Esophagus squamous epithelium (tissue), 5 donors: ENCODE measurements at regions of chr10 and their contacts with region 1.

Region 1: GRCh38 chr10:91908337-91909116 is 759 bp downstream of the FGFBP3 start:
- DNase-seq: peak; percentile 8
- H3K4me3 ChIP-seq: peak overlapping the region; percentile 54 to 98 (median 75)
- H3K27ac ChIP-seq: peak overlapping the region; percentile 65 to 85 (median 73)
- H3K4me1 ChIP-seq: peaks cover 6 to 30% (median 10%) of the 10 kb centered on the region in 3 donors
- H3K27me3 ChIP-seq: peaks cover 0 to 1% (median 0%) of the 10 kb centered on the region in 4 donors
- CTCF ChIP-seq: peak in 5 of 6 experiments; percentile 9 to 37 (median 17)
- POLR2A ChIP-seq: no peak

Region 2: GRCh38 chr10:91758303-91759146 is 150.0 kb before region 1 on chr10:
- intact Hi-C with region 1: loop called (anchors 5 kb)
- DNase-seq: no peak
- H3K4me3 ChIP-seq: no peak overlapping the region
- H3K27ac ChIP-seq: no peak overlapping the region
- H3K4me1 ChIP-seq: no peaks in the 10 kb centered on the region
- H3K27me3 ChIP-seq: peaks cover 0 to 7% (median 0%) of the 10 kb centered on the region in 4 donors
- CTCF ChIP-seq: peak in 5 of 6 experiments; percentile 43 to 67 (median 49)
- POLR2A ChIP-seq: no peak

Region 3: DNA sequence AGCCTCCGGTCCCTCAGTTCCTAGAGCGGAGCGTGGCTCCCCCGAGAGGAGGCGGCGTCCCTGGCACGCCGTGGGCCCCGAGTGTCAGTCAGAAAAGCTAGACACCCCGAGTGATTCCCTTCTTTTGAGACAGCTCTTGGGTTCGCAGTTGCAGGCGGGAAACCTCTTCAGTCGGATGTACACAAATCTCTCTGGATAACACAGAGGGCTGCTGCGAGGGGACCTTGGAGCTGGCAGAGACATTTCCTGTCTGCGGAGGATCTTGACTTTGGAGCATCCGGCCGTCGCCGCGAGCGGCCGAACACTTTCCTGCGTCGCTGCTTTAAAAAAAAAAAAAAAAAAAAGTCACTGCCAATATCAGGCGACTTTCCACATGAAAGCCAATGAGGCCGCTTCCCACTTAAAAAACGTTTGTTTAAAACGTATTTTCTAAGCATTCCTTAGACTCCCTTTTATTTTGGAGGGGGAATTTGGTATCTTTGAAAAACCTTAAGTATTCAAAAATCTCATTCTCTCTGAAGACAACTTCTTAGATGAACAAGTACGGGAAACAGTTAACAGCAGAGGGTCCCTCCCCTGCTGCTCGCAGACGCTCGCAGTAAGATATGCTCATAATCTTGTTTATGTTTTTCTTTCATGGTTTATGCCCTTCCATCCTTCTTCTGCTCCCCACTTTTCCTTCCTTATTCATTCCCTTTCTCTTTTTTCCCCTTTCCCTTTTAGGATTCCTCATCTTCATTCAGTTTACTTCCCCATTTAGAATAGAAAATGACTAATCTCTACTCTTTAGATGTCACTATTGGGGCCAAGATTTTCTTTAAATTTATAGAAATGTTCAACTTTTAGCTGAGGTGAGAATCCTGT is 791.2 kb after region 1 on chr10:
- intact Hi-C with region 1: no loop called
- DNase-seq: no peak
- H3K4me3 ChIP-seq: peak overlapping the region; percentile 17 to 60 (median 39)
- H3K27ac ChIP-seq: peak overlapping the region; percentile 48 to 70 (median 58)
- H3K4me1 ChIP-seq: peaks cover 0 to 25% (median 0%) of the 10 kb centered on the region in 3 donors
- H3K27me3 ChIP-seq: peaks cover 0 to 71% (median 0%) of the 10 kb centered on the region in 4 donors
- CTCF ChIP-seq: no peak
- POLR2A ChIP-seq: no peak